ENCODE measurements at regions of chr13 and their contacts with region 1.

Region 1: GRCh38 chr13:40149611-40150274 is 494.3 kb downstream of the COG6 start:
- DNase-seq: no peak
- ATAC-seq: no peak
- H3K4me3 Mint-ChIP-seq: no peak overlapping the region
- H3K27ac Mint-ChIP-seq: no peak overlapping the region
- H3K4me1 Mint-ChIP-seq: peaks cover 65% of the 10 kb centered on the region
- H3K27me3 Mint-ChIP-seq: no peaks in the 10 kb centered on the region
- CTCF ChIP-seq: no peak

Region 2: DNA sequence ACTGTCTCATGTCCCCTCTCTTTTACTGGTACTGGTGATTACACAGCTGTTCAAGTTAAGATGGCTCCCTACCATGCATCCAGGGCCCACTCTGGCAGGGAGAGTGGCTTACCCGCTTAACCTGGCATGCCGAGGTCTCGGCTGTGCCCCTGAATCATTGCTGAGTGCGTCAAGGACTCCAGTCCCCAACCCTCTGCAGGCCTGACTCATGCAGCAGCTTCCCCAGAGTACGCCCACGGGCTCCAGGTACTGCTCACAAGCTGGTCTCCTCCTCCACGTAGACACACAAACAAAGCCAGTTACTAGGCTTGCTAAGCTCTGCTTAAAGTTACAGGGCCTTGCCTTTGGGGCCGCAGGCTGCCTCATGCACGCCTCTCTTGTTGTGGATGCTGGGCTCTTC is 46.9 kb before region 1 on chr13:
- CTCF ChIA-PET with region 1: no interaction called
- POLR2A ChIA-PET with region 1: no interaction called
- intact Hi-C with region 1: loop called (anchors 5 kb)
- DNase-seq: peak; percentile 96
- ATAC-seq: peak; percentile 91
- H3K4me3 Mint-ChIP-seq: peak overlapping the region; percentile 29
- H3K27ac Mint-ChIP-seq: peak overlapping the region; percentile 89
- H3K4me1 Mint-ChIP-seq: peaks cover 34% of the 10 kb centered on the region
- H3K27me3 Mint-ChIP-seq: no peaks in the 10 kb centered on the region
- CTCF ChIP-seq: no peak